ENCODE measurements at regions of chr22 and their contacts with region 1.

Region 1: DNA sequence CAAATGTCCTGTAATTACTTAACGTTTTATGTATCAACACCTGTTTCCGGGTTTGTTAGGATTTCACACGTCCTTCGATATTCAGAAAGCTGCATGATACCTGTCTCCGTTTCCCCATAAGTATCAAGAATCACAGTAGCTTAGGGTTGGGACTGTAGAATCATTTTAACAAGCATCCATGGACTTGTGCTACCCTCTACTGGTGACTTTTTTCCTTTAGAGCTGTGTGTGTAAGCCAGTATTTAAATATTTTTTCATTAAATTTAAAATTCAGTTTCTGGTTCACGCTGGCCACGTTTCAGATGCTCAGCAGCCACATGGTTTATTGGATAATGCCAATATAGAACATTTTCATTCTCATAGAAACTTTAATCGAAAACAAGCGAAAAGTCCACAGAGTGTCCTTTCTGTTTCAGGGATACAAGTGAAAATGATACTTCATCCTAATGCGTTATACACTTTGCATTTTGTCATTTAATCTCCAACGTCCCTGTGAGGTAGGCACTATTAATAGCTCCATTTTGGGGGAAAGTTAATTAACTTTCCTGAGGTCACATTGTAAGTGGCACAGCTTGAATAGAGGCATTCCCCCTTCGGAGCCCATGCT is 61.5 kb upstream of the SLC25A18 start:
- DNase-seq: no peak
- ATAC-seq: peak; percentile 90

Region 2: DNA sequence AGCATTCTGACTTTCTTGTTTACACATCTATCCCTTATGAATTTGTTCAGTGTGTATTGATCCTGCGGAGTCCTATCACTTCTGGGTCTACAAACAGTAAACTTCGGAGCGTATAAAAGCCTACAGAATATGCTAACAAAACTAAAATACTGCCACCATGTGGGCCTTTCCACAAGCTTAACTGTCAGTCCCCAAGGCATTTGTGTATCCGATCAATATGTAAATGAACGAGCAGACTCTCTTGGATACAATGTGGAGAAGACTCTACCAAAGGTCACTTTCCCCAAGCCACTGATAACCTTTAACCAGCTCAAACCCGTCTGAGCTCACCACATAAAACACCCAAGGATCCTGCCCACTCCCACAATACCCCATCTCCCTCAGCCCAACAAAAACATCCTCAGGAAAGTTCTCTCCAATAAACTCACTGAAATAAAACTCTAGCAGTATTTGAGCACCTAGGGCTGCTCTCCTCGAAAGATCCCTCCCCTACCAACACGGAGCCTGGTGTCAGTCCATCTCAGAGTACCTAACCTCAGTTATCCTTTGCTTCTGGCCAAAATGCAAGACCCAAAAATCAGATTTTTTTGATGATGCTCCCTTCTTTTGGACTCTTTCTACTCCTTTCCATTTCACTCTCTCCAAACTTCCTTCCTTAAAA is 300.4 kb before region 1 on chr22:
- intact Hi-C with region 1: loop called in 1 of 2 experiments (anchors 10 kb)
- DNase-seq: no peak
- ATAC-seq: no peak